Activated T-helper 1 cell treated with anti-CD3 and anti-CD28 coated beads, Interleukin-12 subunit alpha, Interleukin-12 subunit beta, Interleukin-2, Interleukin-4 antibody, amounts not matched to agents 30 ng/mL and 10 ng/mL and 1 ng/mL, durations not matched to agents 14 hours and 24 hours and 36 hours (primary cell): ENCODE measurements at regions of chr2 and their contacts with region 1.

Region 1: DNA sequence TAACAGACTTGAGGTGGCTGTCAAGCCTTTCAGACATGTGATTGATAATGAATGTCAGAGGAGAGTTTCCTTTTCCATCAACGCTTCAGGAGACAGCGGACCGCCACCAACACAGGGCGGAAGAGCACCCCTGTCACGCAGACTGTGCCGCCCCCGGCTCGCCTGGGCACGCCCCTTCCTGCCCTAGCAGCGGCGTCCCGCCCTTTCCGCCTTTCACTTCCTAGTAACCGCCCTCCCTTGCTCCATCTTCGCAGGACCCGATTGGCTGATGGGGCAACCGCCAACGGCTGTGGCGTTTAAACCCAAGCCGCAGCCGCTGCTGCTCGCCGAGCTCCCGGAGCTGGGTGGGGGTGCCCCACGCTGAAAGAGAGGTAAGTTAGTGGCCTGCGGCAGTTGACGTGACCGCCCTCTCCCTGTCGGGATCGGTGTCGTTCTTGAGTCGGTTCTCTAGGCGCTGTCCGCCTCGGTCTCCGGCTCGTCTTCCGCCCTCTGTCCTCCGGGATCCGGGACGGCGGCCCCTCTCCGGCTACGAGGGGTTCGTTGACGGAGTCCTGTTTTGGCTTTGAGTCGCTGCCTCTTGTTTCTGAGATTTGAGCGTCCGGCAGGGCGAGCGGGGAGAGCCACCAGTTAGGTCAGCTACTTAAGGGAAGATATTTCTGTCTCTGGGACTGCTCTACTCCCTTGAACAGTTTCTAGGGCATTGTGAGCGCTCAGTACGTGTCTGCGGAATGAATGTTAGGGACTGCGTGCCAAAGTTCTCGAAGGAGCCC is at the start of gene SGO2:
- DNase-seq: peak; percentile 95
- H3K4me3 Mint-ChIP-seq: peak within 1 kb of the TSS; percentile 94
- H3K27ac Mint-ChIP-seq: peak within 1 kb of the TSS; percentile 89
- H3K4me1 Mint-ChIP-seq: peaks cover 32% of the 10 kb centered on the region
- H3K27me3 Mint-ChIP-seq: no peaks in the 10 kb centered on the region
- total RNA-seq, gene SGO2: 20.5 and 20.9 TPM in 2 replicates

Region 2: GRCh38 chr2:199955339-199956261 is 570.5 kb before region 1 on chr2 and contains the starts of genes MAIP1 and TYW5:
- intact Hi-C with region 1: loop called (anchors 1 kb)
- DNase-seq: peak; percentile 73
- H3K4me3 Mint-ChIP-seq: peak within 1 kb of the TSS; percentile 99
- H3K27ac Mint-ChIP-seq: peak within 1 kb of the TSS; percentile 93
- H3K4me1 Mint-ChIP-seq: peaks cover 62% of the 10 kb centered on the region
- H3K27me3 Mint-ChIP-seq: no peaks in the 10 kb centered on the region
- total RNA-seq, gene MAIP1: 24.7 and 27.1 TPM in 2 replicates
- total RNA-seq, gene TYW5: 11.7 and 13.9 TPM in 2 replicates

Region 3: DNA sequence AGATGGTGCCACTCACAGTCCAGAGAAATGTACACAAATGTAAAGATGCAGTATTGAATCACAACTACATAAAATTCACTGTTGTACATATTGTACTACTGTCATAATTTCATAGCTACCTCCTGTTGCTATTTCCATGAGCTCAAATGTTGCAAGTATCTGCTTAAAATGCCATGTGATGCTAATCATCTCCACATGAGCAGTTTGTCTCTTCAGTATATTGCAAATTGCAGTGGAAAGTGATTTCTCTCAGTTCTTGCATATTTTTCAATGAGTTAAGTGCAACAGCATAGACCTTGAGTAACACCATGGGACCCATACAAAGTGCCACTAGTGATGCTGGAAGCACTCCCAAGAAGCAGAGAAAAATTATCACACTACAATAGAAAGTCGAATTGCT is 518.8 kb before region 1 on chr2:
- intact Hi-C with region 1: no loop called
- DNase-seq: no peak
- H3K4me3 Mint-ChIP-seq: no peak overlapping the region
- H3K27ac Mint-ChIP-seq: no peak overlapping the region
- H3K4me1 Mint-ChIP-seq: no peaks in the 10 kb centered on the region
- H3K27me3 Mint-ChIP-seq: peaks cover 14% of the 10 kb centered on the region

Region 4: GRCh38 chr2:200306196-200306930 is 219.7 kb before region 1 on chr2 and contains the start of gene SPATS2L:
- intact Hi-C with region 1: loop called (anchors 5 kb)
- DNase-seq: peak; percentile 44
- H3K4me3 Mint-ChIP-seq: peak within 1 kb of the TSS; percentile 90
- H3K27ac Mint-ChIP-seq: peak within 1 kb of the TSS; percentile 85
- H3K4me1 Mint-ChIP-seq: peaks cover 35% of the 10 kb centered on the region
- H3K27me3 Mint-ChIP-seq: peaks cover 10% of the 10 kb centered on the region
- total RNA-seq, gene SPATS2L: 35.1 and 38.0 TPM in 2 replicates

Region 5: DNA sequence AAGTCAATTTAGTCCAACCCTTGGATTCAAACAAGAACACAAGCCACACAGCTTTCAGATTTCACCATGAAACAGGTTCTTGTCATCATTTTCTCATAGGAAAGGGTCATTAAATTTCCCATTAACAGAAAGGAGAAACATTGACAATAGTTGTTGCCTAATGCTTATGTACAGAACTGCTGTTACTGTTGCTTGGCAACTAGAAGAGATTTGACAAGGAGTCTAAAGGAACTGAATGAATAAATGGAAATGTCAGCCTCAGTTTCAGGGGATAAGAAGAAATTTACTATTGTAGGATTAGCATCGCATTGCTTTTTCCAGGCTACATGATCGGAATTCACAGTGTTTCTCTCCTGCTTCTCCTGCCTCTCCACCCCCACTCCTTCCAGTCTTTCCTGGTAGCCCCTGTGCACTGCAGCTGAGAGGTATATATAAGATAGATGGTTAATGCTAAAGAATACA is 129.3 kb before region 1 on chr2:
- intact Hi-C with region 1: no loop called
- DNase-seq: no peak
- H3K4me3 Mint-ChIP-seq: no peak overlapping the region
- H3K27ac Mint-ChIP-seq: no peak overlapping the region
- H3K4me1 Mint-ChIP-seq: peaks cover 12% of the 10 kb centered on the region
- H3K27me3 Mint-ChIP-seq: no peaks in the 10 kb centered on the region

Region 6: GRCh38 chr2:200509612-200510433 is 16.2 kb before region 1 on chr2 and contains the start of gene KCTD18:
- intact Hi-C with region 1: loop called (anchors 1 kb)
- DNase-seq: peak; percentile 90
- H3K4me3 Mint-ChIP-seq: peak within 1 kb of the TSS; percentile 96
- H3K27ac Mint-ChIP-seq: peak within 1 kb of the TSS; percentile 90
- H3K4me1 Mint-ChIP-seq: peaks cover 21% of the 10 kb centered on the region
- H3K27me3 Mint-ChIP-seq: no peaks in the 10 kb centered on the region
- total RNA-seq, gene KCTD18: 14.5 and 15.8 TPM in 2 replicates

Region 7: GRCh38 chr2:200703127-200703925 is 177.3 kb after region 1 on chr2:
- intact Hi-C with region 1: loop called (anchors 1 kb)
- DNase-seq: peak; percentile 4
- H3K4me3 Mint-ChIP-seq: peak overlapping the region; percentile 35
- H3K27ac Mint-ChIP-seq: peak overlapping the region; percentile 82
- H3K4me1 Mint-ChIP-seq: peaks cover 48% of the 10 kb centered on the region
- H3K27me3 Mint-ChIP-seq: no peaks in the 10 kb centered on the region

Region 8: DNA sequence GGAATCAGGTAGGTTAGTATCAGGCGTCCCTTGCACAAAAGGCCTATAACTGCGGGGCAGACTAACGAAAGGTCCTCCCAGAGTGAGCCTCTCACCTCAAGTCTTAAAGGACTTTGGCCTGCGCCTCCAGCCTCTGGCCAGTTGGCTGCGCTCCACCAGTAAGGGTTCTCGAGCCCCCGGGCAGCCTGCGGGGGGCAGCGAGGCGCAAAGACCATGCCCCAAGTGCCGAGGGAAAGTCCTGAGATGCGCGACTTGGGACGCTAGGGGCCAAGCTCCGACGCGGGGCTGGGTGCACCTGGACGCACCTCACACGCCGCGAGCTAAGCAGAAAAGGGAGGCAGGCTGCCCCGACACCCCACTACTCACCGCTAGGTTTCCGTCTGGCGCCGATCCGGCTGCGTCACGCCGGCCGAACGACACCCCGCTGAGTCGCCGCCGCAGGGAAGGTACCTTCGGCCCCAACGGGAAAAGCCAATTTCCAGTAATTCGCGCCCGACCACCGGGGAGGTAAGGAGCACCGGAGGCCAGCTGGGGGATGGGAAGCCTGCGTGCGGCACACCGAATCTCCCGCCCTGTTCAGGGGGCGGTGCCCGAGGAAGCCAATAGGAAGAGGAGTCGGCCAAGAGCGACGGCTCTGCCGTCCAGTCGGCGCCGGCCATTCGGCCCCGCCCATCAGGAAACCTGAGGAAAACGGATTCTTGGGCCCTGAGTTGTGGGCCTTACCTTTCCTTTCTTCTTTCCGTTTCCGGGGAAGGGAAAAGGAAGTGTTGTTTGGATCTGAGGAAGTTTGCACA is 437.3 kb after region 1 on chr2 and contains the start of gene ORC2:
- intact Hi-C with region 1: loop called (anchors 5 kb)
- DNase-seq: peak; percentile 93
- H3K4me3 Mint-ChIP-seq: peak within 1 kb of the TSS; percentile 97
- H3K27ac Mint-ChIP-seq: peak within 1 kb of the TSS; percentile 93
- H3K4me1 Mint-ChIP-seq: peaks cover 58% of the 10 kb centered on the region
- H3K27me3 Mint-ChIP-seq: no peaks in the 10 kb centered on the region
- total RNA-seq, gene ORC2: 63.1 and 63.3 TPM in 2 replicates